ENCODE measurements at regions of chr16 and their contacts with region 1.

Region 1: DNA sequence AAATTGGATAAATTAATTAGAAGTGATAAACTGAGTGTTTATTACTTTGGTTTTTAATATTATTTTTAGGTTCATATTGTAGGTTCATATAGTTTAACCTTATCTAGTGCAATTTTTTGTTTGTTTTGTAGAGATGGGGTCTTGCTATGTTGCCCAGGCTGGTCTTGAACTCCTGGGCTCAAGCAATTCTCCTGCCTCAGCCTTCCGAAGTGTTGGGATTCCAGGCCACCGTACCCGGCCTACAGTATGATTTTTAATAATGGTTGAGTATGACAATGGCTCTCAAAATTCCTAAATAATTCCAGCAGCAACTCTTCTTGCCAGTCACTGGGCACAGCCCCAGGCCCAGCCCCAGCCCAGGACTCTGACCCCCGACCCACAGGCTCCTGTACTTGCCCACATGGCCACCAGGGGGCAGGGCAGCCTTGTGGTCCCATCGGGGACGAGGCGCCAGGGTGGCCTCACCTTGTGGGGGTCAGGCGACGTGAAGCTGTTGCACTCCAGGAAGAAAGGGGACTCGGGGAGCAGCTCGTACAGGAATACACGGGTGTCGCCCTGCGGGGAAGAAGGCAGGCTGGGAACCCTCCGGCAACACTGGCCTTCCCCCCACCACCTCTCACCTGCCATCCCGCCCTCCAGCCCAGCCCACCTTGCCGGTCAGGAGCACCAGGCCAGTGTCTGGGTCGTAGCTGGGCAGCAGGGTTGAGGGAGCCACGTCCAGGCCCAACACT is 7.9 kb upstream of the PAM16 start:
- DNase-seq: peak; percentile 43 to 76 (median 61)
- ATAC-seq: peak; percentile 81
- H3K4me3 ChIP-seq: no peak overlapping the region
- H3K4me3 Mint-ChIP-seq: no peak overlapping the region
- H3K27ac ChIP-seq: no peak overlapping the region
- H3K27ac Mint-ChIP-seq: peak overlapping the region in 6 of 9 donors; percentile 37 to 94 (median 62)
- H3K4me1 ChIP-seq: no peaks in the 10 kb centered on the region
- H3K4me1 Mint-ChIP-seq: peaks cover 0 to 11% (median 0%) of the 10 kb centered on the region in 7 donors
- H3K27me3 ChIP-seq: no peaks in the 10 kb centered on the region
- H3K27me3 Mint-ChIP-seq: no peaks in the 10 kb centered on the region

Region 2: DNA sequence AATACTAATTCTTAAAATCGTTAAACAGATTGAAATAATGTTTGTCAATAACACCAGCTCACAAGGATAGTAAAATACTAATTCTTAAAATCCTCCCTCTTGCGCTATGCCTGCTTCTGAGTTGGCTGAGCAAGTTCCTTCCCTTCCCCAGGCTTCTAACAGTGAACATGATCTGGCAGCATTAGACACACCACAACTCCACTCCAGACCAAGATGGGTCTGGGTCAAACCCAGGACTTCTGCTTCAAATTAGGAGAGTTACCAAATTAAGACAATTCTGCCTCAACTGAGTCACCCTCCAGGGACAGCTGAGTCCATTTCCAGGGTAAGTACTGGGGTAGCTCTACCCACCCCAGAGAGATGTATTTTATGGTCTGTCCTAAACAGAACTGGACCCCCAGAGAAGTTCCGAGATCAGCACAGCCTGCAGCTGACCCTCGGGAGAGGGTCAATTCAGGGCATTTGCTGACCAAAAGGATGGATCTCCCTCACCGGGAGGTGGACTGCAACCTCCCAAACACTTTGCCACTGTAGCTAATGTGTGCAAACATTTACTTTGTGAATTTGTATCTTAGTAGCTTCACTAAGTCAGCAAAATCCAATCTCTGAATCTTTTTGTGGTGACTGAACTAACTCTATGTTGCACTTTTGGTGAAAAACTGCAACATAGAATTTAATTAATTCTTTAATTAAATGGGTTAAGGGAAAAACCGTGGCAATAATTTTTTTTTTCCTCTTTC is 291.6 kb before region 1 on chr16:
- CTCF ChIA-PET with region 1: no interaction called
- POLR2A ChIA-PET with region 1: no interaction called
- intact Hi-C with region 1: no loop called
- DNase-seq: no peak
- ATAC-seq: no peak
- H3K4me3 ChIP-seq: no peak overlapping the region
- H3K4me3 Mint-ChIP-seq: peak overlapping the region in 2 of 10 donors; percentile 6 to 29
- H3K27ac ChIP-seq: no peak overlapping the region
- H3K27ac Mint-ChIP-seq: no peak overlapping the region
- H3K4me1 ChIP-seq: no peaks in the 10 kb centered on the region
- H3K4me1 Mint-ChIP-seq: peaks cover 0 to 19% (median 8%) of the 10 kb centered on the region in 7 donors
- H3K27me3 ChIP-seq: no peaks in the 10 kb centered on the region
- H3K27me3 Mint-ChIP-seq: peaks cover 0 to 2% (median 0%) of the 10 kb centered on the region in 5 donors

Region 3: GRCh38 chr16:4371357-4372000 is 12.5 kb after region 1 on chr16 and contains the start of gene VASN:
- CTCF ChIA-PET with region 1: no interaction called
- POLR2A ChIA-PET with region 1: no interaction called
- intact Hi-C with region 1: no loop called
- DNase-seq: peak; percentile 68 to 84 (median 78)
- ATAC-seq: peak; percentile 89
- H3K4me3 ChIP-seq: peak within 1 kb of the TSS; percentile 51
- H3K4me3 Mint-ChIP-seq: peak within 1 kb of the TSS; percentile 61 to 88 (median 81)
- H3K27ac ChIP-seq: peak within 1 kb of the TSS; percentile 58
- H3K27ac Mint-ChIP-seq: peak within 1 kb of the TSS in 6 of 9 donors; percentile 43 to 74 (median 66)
- H3K4me1 ChIP-seq: peaks cover 15 to 19% of the 10 kb centered on the region in 2 donors
- H3K4me1 Mint-ChIP-seq: peaks cover 0 to 24% (median 12%) of the 10 kb centered on the region in 7 donors
- H3K27me3 ChIP-seq: no peaks in the 10 kb centered on the region
- H3K27me3 Mint-ChIP-seq: no peaks in the 10 kb centered on the region
- total RNA-seq, gene VASN: 0.24 to 1.3 (median 0.45) TPM in 4 of 5 experiments, not detected in the other

Region 4: GRCh38 chr16:4402439-4403132 is 43.6 kb after region 1 on chr16:
- CTCF ChIA-PET with region 1: interaction called, 4 read pairs
- POLR2A ChIA-PET with region 1: no interaction called
- intact Hi-C with region 1: loop called (anchors 1 to 2 kb)
- DNase-seq: peak in 8 of 9 donors; percentile 33 to 76 (median 64)
- ATAC-seq: peak; percentile 61
- H3K4me3 ChIP-seq: no peak overlapping the region
- H3K4me3 Mint-ChIP-seq: peak overlapping the region in 1 of 10 donors; percentile 13
- H3K27ac ChIP-seq: no peak overlapping the region
- H3K27ac Mint-ChIP-seq: peak overlapping the region in 4 of 9 donors; percentile 14 to 66 (median 28)
- H3K4me1 ChIP-seq: no peaks in the 10 kb centered on the region
- H3K4me1 Mint-ChIP-seq: peaks cover 9 to 29% (median 19%) of the 10 kb centered on the region in 7 donors
- H3K27me3 ChIP-seq: no peaks in the 10 kb centered on the region
- H3K27me3 Mint-ChIP-seq: no peaks in the 10 kb centered on the region

Region 5: GRCh38 chr16:4550591-4550990 is 191.6 kb after region 1 on chr16:
- CTCF ChIA-PET with region 1: interaction called, 3 read pairs
- POLR2A ChIA-PET with region 1: no interaction called
- intact Hi-C with region 1: loop called in 1 of 2 experiments (anchors 1 kb)
- DNase-seq: no peak
- ATAC-seq: no peak
- H3K4me3 ChIP-seq: no peak overlapping the region
- H3K4me3 Mint-ChIP-seq: no peak overlapping the region
- H3K27ac ChIP-seq: no peak overlapping the region
- H3K27ac Mint-ChIP-seq: peak overlapping the region in 1 of 9 donors; percentile 36
- H3K4me1 ChIP-seq: peaks cover 0 to 7% of the 10 kb centered on the region in 2 donors
- H3K4me1 Mint-ChIP-seq: peaks cover 0 to 10% (median 5%) of the 10 kb centered on the region in 7 donors
- H3K27me3 ChIP-seq: no peaks in the 10 kb centered on the region
- H3K27me3 Mint-ChIP-seq: peaks cover 0 to 6% (median 0%) of the 10 kb centered on the region in 5 donors

Region 6: DNA sequence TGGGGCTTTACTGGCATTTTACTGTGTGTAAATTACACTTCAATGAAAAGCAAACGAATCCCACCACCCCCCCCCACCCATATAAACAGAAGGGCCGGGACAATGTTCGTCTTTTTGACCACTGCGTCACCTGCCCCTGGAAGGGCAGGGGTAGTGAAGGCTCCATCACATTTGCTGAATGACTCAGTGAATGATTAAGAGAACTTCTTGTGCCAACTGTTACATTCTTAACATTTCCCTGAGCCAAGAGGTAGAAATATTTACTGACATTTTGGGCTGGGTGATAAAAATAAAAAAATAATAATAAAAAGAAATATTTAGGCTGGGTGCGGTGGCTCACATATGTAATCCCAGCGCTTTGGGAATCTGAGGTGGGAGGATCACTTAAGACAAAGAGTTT is 221.2 kb after region 1 on chr16:
- CTCF ChIA-PET with region 1: no interaction called
- POLR2A ChIA-PET with region 1: no interaction called
- intact Hi-C with region 1: loop called in 1 of 2 experiments (anchors 1 kb)
- DNase-seq: no peak
- ATAC-seq: no peak
- H3K4me3 ChIP-seq: no peak overlapping the region
- H3K4me3 Mint-ChIP-seq: no peak overlapping the region
- H3K27ac ChIP-seq: no peak overlapping the region
- H3K27ac Mint-ChIP-seq: no peak overlapping the region
- H3K4me1 ChIP-seq: no peaks in the 10 kb centered on the region
- H3K4me1 Mint-ChIP-seq: no peaks in the 10 kb centered on the region
- H3K27me3 ChIP-seq: no peaks in the 10 kb centered on the region
- H3K27me3 Mint-ChIP-seq: no peaks in the 10 kb centered on the region